ENCODE measurements at regions of chr3 and their contacts with region 1.

Region 1: GRCh38 chr3:62558549-62559112 is 185.3 kb upstream of the FEZF2 start:
- DNase-seq: no peak
- ATAC-seq: peak; percentile 74
- H3K4me3 ChIP-seq: no peak overlapping the region
- H3K27ac ChIP-seq: no peak overlapping the region
- H3K4me1 ChIP-seq: no peaks in the 10 kb centered on the region
- H3K27me3 ChIP-seq: 0 out of 2 replicates have a peak, but pooled peaks cover 9% of the 10 kb centered on the region
- CTCF ChIP-seq: peak; percentile 34 to 67 (median 52); a peak in 5 of 6 replicates
- POLR2A ChIP-seq: no peak
- RAD21 ChIP-seq: peak; percentile 61

Region 2: GRCh38 chr3:62201438-62202035 is 357.1 kb before region 1 on chr3:
- CTCF ChIA-PET with region 1: interaction called, 10 read pairs
- POLR2A ChIA-PET with region 1: no interaction called
- RAD21 ChIA-PET with region 1: no interaction called
- intact Hi-C with region 1: loop called (anchors 1 kb)
- DNase-seq: peak; percentile 16
- ATAC-seq: peak; percentile 80
- H3K4me3 ChIP-seq: no peak overlapping the region
- H3K27ac ChIP-seq: no peak overlapping the region
- H3K4me1 ChIP-seq: no peaks in the 10 kb centered on the region
- H3K27me3 ChIP-seq: no peaks in the 10 kb centered on the region
- CTCF ChIP-seq: peak; percentile 38 to 58 (median 42); a peak in 5 of 6 replicates
- POLR2A ChIP-seq: no peak
- RAD21 ChIP-seq: peak; percentile 58

Region 3: DNA sequence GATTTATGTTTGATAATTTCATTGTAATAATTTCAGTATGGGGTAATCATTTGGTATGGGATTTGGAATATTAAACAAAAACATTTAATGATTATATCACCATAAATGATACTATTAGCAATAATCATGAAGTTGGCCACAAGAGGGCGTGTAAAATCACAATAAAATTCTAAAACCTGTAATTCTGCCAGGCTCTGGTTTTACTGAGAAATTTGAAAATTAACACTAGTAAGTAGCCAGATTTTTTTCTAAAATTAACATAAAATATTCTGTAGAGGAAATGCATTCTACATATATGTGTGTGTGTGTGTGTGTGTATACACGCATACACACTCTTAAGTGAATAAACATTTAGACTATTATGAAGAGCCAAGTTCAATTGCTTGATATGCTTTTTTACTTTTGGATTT is 225.8 kb before region 1 on chr3:
- CTCF ChIA-PET with region 1: interaction called, 4 read pairs
- POLR2A ChIA-PET with region 1: no interaction called
- RAD21 ChIA-PET with region 1: no interaction called
- intact Hi-C with region 1: loop called (anchors 1 kb)
- DNase-seq: peak; percentile 2
- ATAC-seq: no peak
- H3K4me3 ChIP-seq: no peak overlapping the region
- H3K27ac ChIP-seq: no peak overlapping the region
- H3K4me1 ChIP-seq: no peaks in the 10 kb centered on the region
- H3K27me3 ChIP-seq: peaks cover 28% of the 10 kb centered on the region
- CTCF ChIP-seq: peak; percentile 18 to 70 (median 32); a peak in 3 of 6 replicates
- POLR2A ChIP-seq: no peak
- RAD21 ChIP-seq: peak; percentile 46

Region 4: GRCh38 chr3:62859203-62859791 is 300.7 kb after region 1 on chr3:
- CTCF ChIA-PET with region 1: no interaction called
- POLR2A ChIA-PET with region 1: no interaction called
- RAD21 ChIA-PET with region 1: no interaction called
- intact Hi-C with region 1: no loop called
- DNase-seq: no peak
- ATAC-seq: no peak
- H3K4me3 ChIP-seq: no peak overlapping the region
- H3K27ac ChIP-seq: no peak overlapping the region
- H3K4me1 ChIP-seq: no peaks in the 10 kb centered on the region
- H3K27me3 ChIP-seq: no peaks in the 10 kb centered on the region
- CTCF ChIP-seq: no peak
- POLR2A ChIP-seq: no peak
- RAD21 ChIP-seq: no peak